ENCODE measurements at regions of chrX and their contacts with region 1.

Region 1: GRCh38 chrX:130079824-130080406 is 30.4 kb downstream of the ELF4 start:
- DNase-seq: peak; percentile 71
- H3K4me3 ChIP-seq: no peak overlapping the region
- H3K27ac ChIP-seq: no peak overlapping the region
- H3K4me1 ChIP-seq: peaks cover 21% of the 10 kb centered on the region
- H3K27me3 ChIP-seq: no peaks in the 10 kb centered on the region
- CTCF ChIP-seq: peak; percentile 51 to 60
- POLR2A ChIP-seq: no peak

Region 2: GRCh38 chrX:130110379-130111219 is 30.7 kb after region 1 on chrX and contains the start of gene ELF4:
- CTCF ChIA-PET with region 1: interaction called, 12 read pairs
- POLR2A ChIA-PET with region 1: interaction called, 5 read pairs
- dilution Hi-C with region 1: no loop called
- intact Hi-C with region 1: loop called (anchors 1 kb)
- DNase-seq: no peak
- H3K4me3 ChIP-seq: peak within 1 kb of the TSS; percentile 11 to 78 (median 61)
- H3K27ac ChIP-seq: peak within 1 kb of the TSS; percentile 84
- H3K4me1 ChIP-seq: peaks cover 30% of the 10 kb centered on the region
- H3K27me3 ChIP-seq: no peaks in the 10 kb centered on the region
- CTCF ChIP-seq: no peak
- POLR2A ChIP-seq: no peak
- total RNA-seq, gene ELF4: 32.9 and 33.4 TPM in 2 replicates

Region 3: DNA sequence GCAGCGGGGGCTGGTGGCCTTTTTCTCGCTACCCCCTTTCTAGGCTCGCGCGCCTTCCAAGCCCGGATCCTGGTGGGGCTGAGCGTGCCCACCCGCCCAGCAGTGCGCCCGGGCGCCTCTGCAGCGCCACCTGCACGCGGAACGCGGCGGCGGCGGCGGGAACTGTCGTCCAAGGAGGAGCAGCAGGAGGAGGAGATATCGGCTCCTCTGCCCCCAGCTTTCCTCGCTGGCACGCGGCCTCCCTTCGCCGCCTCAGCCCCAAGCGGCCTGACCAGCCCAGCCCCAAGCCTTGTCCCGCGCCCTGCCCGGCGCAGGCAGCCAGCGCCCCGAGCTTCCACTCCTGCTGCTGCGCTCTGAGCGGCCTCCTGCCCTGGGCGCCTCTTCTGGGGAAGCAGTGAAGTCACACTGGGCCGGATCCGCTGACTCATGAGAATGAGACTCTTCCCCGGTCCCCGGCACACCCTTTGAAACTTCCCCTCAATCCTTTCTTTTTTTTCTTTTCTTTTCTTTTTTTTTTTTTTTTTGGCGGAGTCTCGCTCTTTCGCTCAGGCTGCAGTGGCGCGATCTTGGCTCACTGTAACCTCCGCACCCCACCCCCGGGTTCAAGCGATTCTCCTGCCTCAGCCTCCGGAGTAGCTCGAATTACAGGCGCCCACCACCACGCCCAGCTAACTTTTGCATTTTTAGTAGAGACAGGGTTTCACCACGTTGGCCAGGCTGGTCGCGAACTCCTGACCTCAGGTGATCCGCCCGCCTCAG is 41.0 kb after region 1 on chrX:
- CTCF ChIA-PET with region 1: interaction called, 65 read pairs
- POLR2A ChIA-PET with region 1: interaction called, 3 read pairs
- dilution Hi-C with region 1: no loop called
- intact Hi-C with region 1: loop called (anchors 1 kb)
- DNase-seq: peak; percentile 75
- H3K4me3 ChIP-seq: peak overlapping the region in 1 of 3 experiments; percentile 30
- H3K27ac ChIP-seq: peak overlapping the region; percentile 82
- H3K4me1 ChIP-seq: peaks cover 40% of the 10 kb centered on the region
- H3K27me3 ChIP-seq: no peaks in the 10 kb centered on the region
- CTCF ChIP-seq: peak; percentile 57 to 62
- POLR2A ChIP-seq: peak; percentile 41

Region 4: DNA sequence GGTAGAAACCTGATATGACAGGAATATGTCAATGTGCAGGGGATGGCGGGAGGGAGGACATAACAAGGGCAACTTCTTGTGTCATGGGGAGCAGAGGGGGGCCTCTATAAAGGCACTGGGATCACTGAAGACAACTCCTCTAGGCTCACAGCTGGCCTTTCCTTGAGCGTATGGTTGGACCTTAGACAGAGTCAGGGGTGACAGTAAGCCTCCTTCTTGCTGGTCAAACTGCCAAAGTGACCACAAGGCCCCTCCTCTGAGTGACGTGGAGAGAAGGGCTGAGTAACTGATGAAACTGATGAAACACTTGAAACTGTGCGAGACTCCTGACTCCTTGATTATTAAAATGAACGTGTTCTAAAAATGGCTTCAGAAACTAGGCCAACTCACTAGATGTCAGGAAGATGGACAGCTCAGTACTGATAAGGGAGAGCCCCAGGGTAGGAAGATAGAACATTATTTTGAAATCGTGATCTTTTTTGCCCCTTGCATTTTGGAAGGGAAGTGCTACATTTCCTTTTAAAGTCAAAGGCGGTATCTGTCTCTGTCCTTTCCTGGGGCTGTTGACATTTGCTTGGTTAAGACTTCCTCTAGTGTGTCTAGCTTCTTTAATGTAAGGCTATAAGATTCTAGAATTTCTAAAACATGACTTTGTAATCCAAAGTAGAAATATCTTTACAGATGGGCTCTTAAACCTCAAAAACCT is 93.4 kb after region 1 on chrX:
- CTCF ChIA-PET with region 1: interaction called, 14 read pairs
- POLR2A ChIA-PET with region 1: no interaction called
- dilution Hi-C with region 1: no loop called
- intact Hi-C with region 1: no loop called
- DNase-seq: peak; percentile 48
- H3K4me3 ChIP-seq: no peak overlapping the region
- H3K27ac ChIP-seq: peak overlapping the region; percentile 69
- H3K4me1 ChIP-seq: peaks cover 26% of the 10 kb centered on the region
- H3K27me3 ChIP-seq: no peaks in the 10 kb centered on the region
- CTCF ChIP-seq: no peak
- POLR2A ChIP-seq: no peak

Region 5: DNA sequence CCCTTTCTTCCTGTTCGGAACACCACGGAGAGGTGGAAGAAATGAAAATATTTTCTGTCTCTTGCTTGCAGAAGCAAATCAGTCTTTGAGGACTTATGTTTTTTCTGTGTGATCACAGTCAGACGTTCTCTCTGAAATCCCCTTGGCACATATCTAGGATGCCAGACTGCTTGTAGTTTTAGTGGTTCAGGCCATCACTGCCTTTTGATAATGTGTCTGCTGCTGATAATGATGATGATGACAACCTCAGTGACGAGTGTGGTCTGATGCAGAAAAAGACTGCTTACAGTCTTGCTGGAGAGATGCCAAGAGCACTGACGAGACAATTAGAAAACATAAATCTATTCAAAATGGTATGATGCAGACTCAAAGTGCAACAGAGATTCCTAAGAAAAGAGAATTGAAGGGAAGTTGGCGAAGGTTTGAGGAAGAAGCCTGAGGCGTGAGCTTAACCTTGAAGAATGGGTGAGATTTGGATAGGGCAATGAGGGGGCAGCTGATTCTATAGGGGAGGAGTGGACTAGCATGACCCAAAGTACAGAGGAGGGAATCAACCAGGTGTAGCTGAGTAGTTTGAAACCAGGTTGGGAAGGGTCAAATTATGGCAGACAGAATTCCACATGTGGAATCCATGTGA is 99.8 kb after region 1 on chrX:
- CTCF ChIA-PET with region 1: interaction called, 10 read pairs
- POLR2A ChIA-PET with region 1: no interaction called
- dilution Hi-C with region 1: no loop called
- intact Hi-C with region 1: no loop called
- DNase-seq: peak; percentile 32
- H3K4me3 ChIP-seq: no peak overlapping the region
- H3K27ac ChIP-seq: no peak overlapping the region
- H3K4me1 ChIP-seq: no peaks in the 10 kb centered on the region
- H3K27me3 ChIP-seq: no peaks in the 10 kb centered on the region
- CTCF ChIP-seq: no peak
- POLR2A ChIP-seq: no peak

Region 6: DNA sequence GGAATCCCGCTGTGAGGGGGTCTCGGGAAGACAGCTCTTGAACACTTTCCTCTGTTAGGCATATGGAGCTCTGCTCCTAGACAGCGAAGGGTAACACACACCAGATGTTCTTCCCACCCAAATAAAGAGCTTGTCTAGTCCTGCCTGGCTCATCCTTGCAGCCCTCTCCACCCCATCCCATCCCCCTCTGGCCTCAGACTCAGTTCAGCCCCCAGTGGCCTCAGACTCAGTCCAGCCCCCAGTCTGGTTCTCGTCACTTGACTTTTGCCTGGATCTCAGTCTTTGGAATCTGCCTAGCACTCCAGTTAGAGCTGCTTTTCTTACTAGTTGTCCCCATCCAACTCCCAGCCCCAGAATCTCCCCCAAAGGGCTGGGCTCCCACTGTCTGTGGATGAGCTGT is 106.7 kb after region 1 on chrX:
- CTCF ChIA-PET with region 1: interaction called, 65 read pairs
- POLR2A ChIA-PET with region 1: no interaction called
- dilution Hi-C with region 1: no loop called
- intact Hi-C with region 1: no loop called
- DNase-seq: no peak
- H3K4me3 ChIP-seq: no peak overlapping the region
- H3K27ac ChIP-seq: no peak overlapping the region
- H3K4me1 ChIP-seq: no peaks in the 10 kb centered on the region
- H3K27me3 ChIP-seq: no peaks in the 10 kb centered on the region
- CTCF ChIP-seq: no peak
- POLR2A ChIP-seq: no peak

Region 7: GRCh38 chrX:130196466-130196865 is 116.6 kb after region 1 on chrX:
- CTCF ChIA-PET with region 1: interaction called, 65 read pairs
- POLR2A ChIA-PET with region 1: interaction called, 3 read pairs
- dilution Hi-C with region 1: no loop called
- intact Hi-C with region 1: loop called (anchors 1 kb)
- DNase-seq: no peak
- H3K4me3 ChIP-seq: no peak overlapping the region
- H3K27ac ChIP-seq: no peak overlapping the region
- H3K4me1 ChIP-seq: no peaks in the 10 kb centered on the region
- H3K27me3 ChIP-seq: no peaks in the 10 kb centered on the region
- CTCF ChIP-seq: no peak
- POLR2A ChIP-seq: no peak

Region 8: GRCh38 chrX:130343411-130343810 is 263.5 kb after region 1 on chrX:
- CTCF ChIA-PET with region 1: no interaction called
- POLR2A ChIA-PET with region 1: no interaction called
- dilution Hi-C with region 1: no loop called
- intact Hi-C with region 1: no loop called
- DNase-seq: no peak
- H3K4me3 ChIP-seq: no peak overlapping the region
- H3K27ac ChIP-seq: no peak overlapping the region
- H3K4me1 ChIP-seq: no peaks in the 10 kb centered on the region
- H3K27me3 ChIP-seq: no peaks in the 10 kb centered on the region
- CTCF ChIP-seq: no peak
- POLR2A ChIP-seq: no peak

Measured in endothelial cell of umbilical vein (primary cell).